GM10248 (cell line): ENCODE measurements at regions of chr3 and their contacts with region 1.

Region 1: DNA sequence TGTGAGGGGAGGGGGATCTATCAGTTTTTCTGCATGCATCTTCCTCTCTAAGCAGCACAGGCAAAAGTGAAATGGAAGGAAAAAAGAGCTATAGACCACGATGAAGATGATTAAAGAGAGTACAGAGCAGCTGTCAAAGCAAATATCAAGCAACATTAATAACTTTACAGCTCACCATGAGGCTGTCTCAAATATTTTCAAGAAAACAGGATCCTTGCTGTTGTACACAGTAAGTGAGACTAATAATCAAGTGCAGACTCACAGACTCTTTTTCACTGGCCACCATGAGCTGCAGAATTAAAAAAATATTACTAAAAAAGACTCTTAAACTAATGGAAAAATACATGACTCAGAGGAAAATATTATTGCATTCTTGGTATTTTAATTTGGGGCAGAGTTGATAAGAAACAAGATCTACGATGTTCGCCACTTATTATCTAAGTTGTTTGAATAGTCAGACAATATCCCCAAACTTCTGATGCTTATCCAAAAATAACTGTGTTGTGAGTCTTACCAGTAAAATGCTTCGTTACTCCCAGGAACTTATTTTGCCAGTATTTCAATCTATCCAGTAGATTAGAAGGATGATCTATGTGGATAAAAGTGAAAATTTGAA is 817.5 kb upstream of the ALCAM start:
- DNase-seq: no peak
- CTCF ChIP-seq: no peak

Region 2: GRCh38 chr3:104536715-104537114 is 12.5 kb before region 1 on chr3:
- CTCF ChIA-PET with region 1: interaction called, 11 read pairs
- POLR2A ChIA-PET with region 1: no interaction called
- DNase-seq: no peak
- CTCF ChIP-seq: no peak

Region 3: GRCh38 chr3:104575634-104576033 is 26.4 kb after region 1 on chr3:
- CTCF ChIA-PET with region 1: no interaction called
- POLR2A ChIA-PET with region 1: no interaction called
- DNase-seq: no peak
- CTCF ChIP-seq: no peak